ENCODE measurements at regions of chr3 and their contacts with region 1.

Region 1: GRCh38 chr3:47420511-47421484 is 40.0 kb downstream of the PTPN23 start:
- DNase-seq: peak; percentile 93
- H3K4me3 ChIP-seq: no peak overlapping the region
- H3K27ac ChIP-seq: peak overlapping the region; percentile 69
- H3K4me1 ChIP-seq: peaks cover 10% of the 10 kb centered on the region
- CTCF ChIP-seq: peak; percentile 91

Region 2: GRCh38 chr3:47404955-47405790 is 15.6 kb before region 1 on chr3:
- CTCF ChIA-PET with region 1: no interaction called
- POLR2A ChIA-PET with region 1: no interaction called
- intact Hi-C with region 1: no loop called
- DNase-seq: no peak
- H3K4me3 ChIP-seq: no peak overlapping the region
- H3K27ac ChIP-seq: no peak overlapping the region
- H3K4me1 ChIP-seq: no peaks in the 10 kb centered on the region
- CTCF ChIP-seq: no peak

Region 3: DNA sequence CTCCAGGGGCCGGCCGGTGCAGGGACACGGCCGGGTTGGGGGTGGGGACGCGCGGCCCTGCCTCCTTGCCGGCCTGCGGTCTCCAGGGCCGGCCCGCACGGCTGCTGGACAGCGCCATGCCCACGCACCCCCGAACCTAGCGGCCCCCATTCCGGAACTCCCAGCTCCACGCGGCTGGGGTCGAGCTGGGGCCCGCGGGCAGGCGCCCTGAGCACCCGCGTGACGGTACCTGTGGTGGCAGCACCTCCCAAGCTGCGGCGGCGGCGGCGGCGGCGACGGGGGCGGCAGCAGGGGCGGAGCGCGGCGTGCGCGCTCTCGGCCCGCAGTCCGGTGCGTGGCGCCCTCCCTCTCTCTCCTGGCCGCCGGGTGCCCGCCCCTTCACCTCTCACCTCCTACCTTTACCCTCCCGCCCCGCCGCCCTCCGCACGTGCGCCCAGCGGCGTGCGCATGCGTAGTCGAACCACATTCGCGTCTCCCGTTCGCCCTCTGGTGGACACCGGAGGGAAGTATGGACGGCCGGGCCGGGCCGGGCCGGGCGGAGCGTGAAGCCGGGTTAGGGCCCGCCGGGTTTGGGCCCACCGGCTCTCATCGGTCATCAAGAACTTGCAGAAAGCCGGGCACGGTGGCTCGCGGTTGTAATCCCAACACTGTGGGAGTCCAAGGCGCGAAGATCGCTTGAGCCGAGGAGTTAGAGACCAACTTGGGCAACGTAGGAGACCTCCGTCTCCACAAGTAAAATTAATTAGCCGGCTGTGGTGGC is 55.0 kb after region 1 on chr3 and contains the start of gene SCAP:
- CTCF ChIA-PET with region 1: interaction called, 5 read pairs
- POLR2A ChIA-PET with region 1: no interaction called
- intact Hi-C with region 1: loop called (anchors 1 kb)
- DNase-seq: peak; percentile 94
- H3K4me3 ChIP-seq: peak within 1 kb of the TSS; percentile 96
- H3K27ac ChIP-seq: peak within 1 kb of the TSS; percentile 25
- H3K4me1 ChIP-seq: peaks cover 13% of the 10 kb centered on the region
- CTCF ChIP-seq: peak; percentile 83
- total RNA-seq, gene SCAP: 49.6 and 63.7 TPM in 2 replicates

Region 4: GRCh38 chr3:47791193-47791855 is 370.5 kb after region 1 on chr3:
- CTCF ChIA-PET with region 1: no interaction called
- POLR2A ChIA-PET with region 1: no interaction called
- intact Hi-C with region 1: loop called (anchors 1 kb)
- DNase-seq: no peak
- H3K4me3 ChIP-seq: no peak overlapping the region
- H3K27ac ChIP-seq: no peak overlapping the region
- H3K4me1 ChIP-seq: peaks cover 11% of the 10 kb centered on the region
- CTCF ChIP-seq: no peak

Measured in OCI-LY7 (cell line).